Pancreas (tissue), 10 donors: ENCODE measurements at regions of chr6 and their contacts with region 1.

Region 1: GRCh38 chr6:144482142-144482541 is 197.0 kb downstream of the UTRN start:
- DNase-seq: peak in 5 of 6 donors; percentile 54 to 72 (median 65)
- ATAC-seq: peak; percentile 73 to 84 (median 82)
- H3K4me3 ChIP-seq: no peak overlapping the region
- H3K27ac ChIP-seq: no peak overlapping the region
- H3K4me1 ChIP-seq: peaks cover 0 to 11% (median 0%) of the 10 kb centered on the region in 3 donors
- H3K27me3 ChIP-seq: no peaks in the 10 kb centered on the region
- CTCF ChIP-seq: peak in 3 of 4 donors; percentile 42 to 53 (median 50)

Region 2: DNA sequence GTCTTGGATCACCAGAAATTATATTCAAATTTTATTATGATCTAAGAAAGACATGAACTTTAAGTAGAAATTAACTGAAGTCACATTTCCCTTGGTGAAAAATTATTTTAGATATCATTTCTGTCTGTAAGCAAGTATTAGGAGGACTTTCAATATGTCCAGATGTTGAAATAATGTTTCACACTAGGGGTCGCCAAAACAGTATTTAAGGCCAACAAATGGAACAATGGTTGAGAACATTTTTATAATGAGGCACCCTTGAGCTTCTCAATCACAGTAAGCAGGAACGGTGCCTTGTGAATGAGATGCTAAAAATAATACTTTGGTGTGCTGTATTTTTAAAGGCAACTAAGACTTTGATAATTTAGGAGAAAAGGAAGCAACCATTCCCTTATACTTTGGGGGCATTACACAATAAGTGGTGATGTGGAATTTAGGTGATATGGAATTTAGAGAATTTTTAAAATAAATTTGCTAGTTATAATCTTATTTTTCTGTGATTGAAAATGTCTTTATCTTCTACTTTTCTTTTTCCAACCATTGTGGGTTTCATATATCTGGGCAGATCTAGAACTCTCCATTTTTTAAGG is 377.1 kb before region 1 on chr6:
- intact Hi-C with region 1: loop called in 2 of 3 experiments (anchors 10 kb)
- DNase-seq: peak in 3 of 6 donors; percentile 8 to 24 (median 20)
- ATAC-seq: peak; percentile 72 to 91 (median 90)
- H3K4me3 ChIP-seq: no peak overlapping the region
- H3K27ac ChIP-seq: no peak overlapping the region
- H3K4me1 ChIP-seq: no peaks in the 10 kb centered on the region
- H3K27me3 ChIP-seq: no peaks in the 10 kb centered on the region
- CTCF ChIP-seq: peak in 3 of 4 donors; percentile 33 to 43 (median 35)

Region 3: DNA sequence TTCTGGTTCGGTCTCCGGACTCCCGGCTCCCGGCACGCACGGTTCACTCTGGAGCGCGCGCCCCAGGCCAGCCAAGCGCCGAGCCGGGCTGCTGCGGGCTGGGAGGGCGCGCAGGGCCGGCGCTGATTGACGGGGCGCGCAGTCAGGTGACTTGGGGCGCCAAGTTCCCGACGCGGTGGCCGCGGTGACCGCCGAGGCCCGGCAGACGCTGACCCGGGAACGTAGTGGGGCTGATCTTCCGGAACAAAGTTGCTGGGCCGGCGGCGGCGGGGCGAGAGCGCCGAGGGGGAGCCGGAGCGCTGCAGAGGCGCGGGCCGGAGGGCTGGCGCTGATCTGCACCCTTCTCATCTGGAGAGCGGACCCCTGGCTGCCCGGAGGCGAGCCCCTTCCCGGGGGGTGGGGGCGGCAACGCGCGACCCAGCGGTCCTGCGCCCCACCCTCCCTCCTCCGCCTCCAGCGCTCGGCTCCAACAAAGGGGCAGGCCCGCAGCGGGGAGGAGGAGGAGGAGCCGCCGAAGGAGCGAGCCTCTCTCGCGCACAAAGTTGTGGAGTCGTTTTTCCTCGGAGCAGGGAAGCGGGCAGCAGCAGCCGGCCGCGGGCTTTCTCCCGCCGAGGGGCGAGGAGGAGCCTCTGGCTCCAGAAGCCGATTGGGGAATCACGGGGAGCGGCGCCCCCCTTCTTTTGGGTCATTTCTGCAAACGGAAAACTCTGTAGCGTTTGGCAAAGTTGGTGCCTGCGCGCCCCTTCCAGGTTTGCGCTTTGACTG is 197.2 kb before region 1 on chr6 and contains the start of gene UTRN:
- intact Hi-C with region 1: loop called in 1 of 3 experiments (anchors 10 kb)
- DNase-seq: peak; percentile 77 to 89 (median 82)
- ATAC-seq: peak; percentile 70 to 80 (median 76)
- H3K4me3 ChIP-seq: peak within 1 kb of the TSS; percentile 83 to 88 (median 87)
- H3K27ac ChIP-seq: peak within 1 kb of the TSS; percentile 90 to 99 (median 94)
- H3K4me1 ChIP-seq: peaks cover 0 to 14% (median 13%) of the 10 kb centered on the region in 3 donors
- H3K27me3 ChIP-seq: no peaks in the 10 kb centered on the region
- CTCF ChIP-seq: no peak
- total RNA-seq, gene UTRN: 80.6 to 116 (median 84.8) TPM